ENCODE measurements at regions of chr17 and their contacts with region 1.

Region 1: GRCh38 chr17:17752089-17752820 is 71.0 kb downstream of the RAI1 start:
- DNase-seq: peak; percentile 97
- H3K4me3 Mint-ChIP-seq: peak overlapping the region; percentile 92
- H3K27ac Mint-ChIP-seq: peak overlapping the region; percentile 98
- H3K4me1 Mint-ChIP-seq: peaks cover 71% of the 10 kb centered on the region
- H3K27me3 Mint-ChIP-seq: no peaks in the 10 kb centered on the region

Region 2: GRCh38 chr17:17280613-17281549 is 471.4 kb before region 1 on chr17 and contains the start of gene COPS3:
- CTCF ChIA-PET with region 1: no interaction called
- intact Hi-C with region 1: loop called (anchors 2 kb)
- DNase-seq: peak; percentile 99
- H3K4me3 Mint-ChIP-seq: peak within 1 kb of the TSS; percentile 94
- H3K27ac Mint-ChIP-seq: peak within 1 kb of the TSS; percentile 88
- H3K4me1 Mint-ChIP-seq: peaks cover 39% of the 10 kb centered on the region
- H3K27me3 Mint-ChIP-seq: no peaks in the 10 kb centered on the region
- total RNA-seq, gene COPS3: 103 to 104 TPM

Region 3: DNA sequence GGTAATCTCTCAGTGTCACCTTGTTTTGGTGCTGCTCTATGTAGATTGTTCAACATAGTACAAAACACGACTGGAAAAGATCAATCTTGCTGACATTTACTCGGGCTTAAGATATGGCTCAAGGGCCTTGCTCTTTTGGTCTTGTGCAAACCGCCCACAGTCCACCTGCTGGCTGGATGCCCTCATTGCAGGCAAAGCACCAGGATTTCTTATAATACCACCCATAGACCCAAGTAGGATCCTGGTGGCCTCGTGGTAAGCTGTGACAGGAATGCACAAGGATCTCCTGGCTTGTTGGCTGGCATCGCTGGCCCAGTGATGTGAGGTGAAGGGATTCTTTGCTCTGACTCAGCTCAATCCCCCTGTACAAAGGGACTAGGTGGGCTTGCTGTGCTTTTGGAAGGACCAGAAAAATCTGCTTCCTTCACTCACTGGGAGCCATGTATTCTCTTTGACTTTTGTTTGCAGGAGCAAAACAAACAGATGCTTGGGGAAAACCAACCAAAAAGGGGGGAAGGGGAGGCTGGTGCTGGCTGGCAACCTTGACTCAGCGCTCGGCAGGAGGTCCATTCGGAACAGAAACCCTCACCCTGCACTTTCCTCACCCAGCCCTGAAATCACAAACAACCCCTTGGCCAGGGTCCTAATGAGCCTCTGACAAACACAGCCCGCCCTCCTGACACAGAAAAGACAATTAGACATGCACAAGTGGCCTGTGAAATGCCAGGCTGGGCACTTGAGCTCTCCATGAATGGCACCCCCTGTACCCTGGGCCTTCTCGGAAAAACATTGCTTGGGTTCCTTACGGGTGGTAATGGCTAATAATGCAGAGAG is 312.0 kb before region 1 on chr17:
- CTCF ChIA-PET with region 1: no interaction called
- intact Hi-C with region 1: no loop called
- DNase-seq: peak; percentile 85
- H3K4me3 Mint-ChIP-seq: no peak overlapping the region
- H3K27ac Mint-ChIP-seq: no peak overlapping the region
- H3K4me1 Mint-ChIP-seq: peaks cover 4% of the 10 kb centered on the region
- H3K27me3 Mint-ChIP-seq: no peaks in the 10 kb centered on the region

Region 4: DNA sequence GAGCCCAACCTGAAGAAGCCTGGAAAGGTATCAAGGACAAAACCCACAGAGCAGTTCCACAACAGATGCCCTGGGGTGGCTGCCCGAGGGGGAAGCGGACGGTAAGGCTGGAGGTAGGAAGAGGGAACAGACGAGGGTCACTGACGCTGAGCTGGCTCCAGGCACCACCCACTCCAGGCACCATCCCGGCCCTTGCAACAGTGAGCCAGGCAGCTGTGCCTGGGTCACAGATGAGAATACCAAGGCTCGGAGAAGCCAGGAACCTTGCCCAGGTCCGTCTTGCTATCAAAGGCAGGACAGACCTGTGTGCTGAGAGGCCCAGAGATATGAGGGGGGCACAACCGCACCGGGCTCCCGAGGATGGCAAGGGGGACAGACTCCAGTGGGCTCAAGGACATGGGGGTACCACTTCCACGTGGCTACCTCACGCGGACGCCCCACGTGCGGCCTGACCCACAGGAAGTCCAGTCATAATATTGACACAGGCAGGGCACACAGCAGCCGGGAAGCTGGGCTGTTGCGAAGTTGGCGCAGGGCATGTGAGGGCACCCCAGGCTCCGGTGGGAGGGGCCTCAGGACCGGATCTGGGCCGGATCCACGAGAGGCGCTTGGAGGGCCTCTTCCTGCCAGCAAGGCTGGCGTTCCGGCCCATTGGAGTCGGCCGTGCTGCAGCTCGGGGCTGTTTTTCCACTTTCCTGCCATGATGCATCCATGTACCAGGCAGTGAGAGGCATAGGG is 190.7 kb before region 1 on chr17:
- CTCF ChIA-PET with region 1: no interaction called
- intact Hi-C with region 1: no loop called
- DNase-seq: no peak
- H3K4me3 Mint-ChIP-seq: no peak overlapping the region
- H3K27ac Mint-ChIP-seq: no peak overlapping the region
- H3K4me1 Mint-ChIP-seq: no peaks in the 10 kb centered on the region
- H3K27me3 Mint-ChIP-seq: no peaks in the 10 kb centered on the region

Region 5: DNA sequence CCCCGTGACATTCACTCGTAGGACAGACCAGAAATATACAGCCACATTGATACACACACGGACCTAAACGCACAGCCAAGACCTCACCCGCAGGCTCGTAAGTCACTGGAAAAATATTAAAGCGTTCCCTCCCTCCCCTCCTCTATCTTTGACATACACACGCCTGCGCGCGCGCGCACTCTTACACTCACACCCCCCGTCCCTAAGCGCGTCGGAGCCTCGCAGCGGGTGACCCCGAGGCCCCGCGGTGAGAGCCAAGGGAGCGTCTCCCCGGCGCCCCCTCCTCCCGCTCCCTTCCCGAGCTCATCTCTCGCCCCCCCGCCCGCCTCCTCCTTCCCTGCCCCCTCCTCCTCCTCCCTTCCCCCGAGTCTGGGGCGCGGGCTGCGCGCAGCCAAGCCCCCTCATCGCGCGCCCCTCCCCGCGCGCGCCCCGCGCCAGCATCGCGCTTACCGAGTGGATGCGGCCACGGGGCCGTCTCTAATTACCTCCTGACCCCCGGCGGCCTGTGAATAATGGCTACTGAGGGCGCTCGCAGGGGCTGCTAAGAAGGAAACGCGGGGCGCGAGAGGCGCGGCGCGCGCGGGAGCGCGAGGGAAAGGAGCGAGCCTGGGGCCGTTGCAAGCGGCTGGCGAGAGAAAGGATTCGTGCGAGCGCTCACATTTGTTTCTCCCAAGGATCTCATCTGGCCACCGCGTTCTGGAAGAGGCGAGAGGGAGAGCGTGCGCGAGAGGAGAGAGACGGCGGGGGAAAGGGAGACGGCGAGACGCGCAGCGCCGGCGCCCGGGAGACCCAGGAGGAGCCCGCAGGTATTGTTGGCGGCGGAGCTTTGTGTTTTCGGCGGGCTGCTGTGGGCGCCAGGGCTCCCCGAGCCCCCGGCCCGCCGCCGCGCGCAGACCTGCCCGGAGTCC is 28.6 kb before region 1 on chr17:
- CTCF ChIA-PET with region 1: no interaction called
- intact Hi-C with region 1: loop called (anchors 2 kb)
- DNase-seq: peak; percentile 22
- H3K4me3 Mint-ChIP-seq: peak overlapping the region; percentile 80
- H3K27ac Mint-ChIP-seq: no peak overlapping the region
- H3K4me1 Mint-ChIP-seq: peaks cover 37% of the 10 kb centered on the region
- H3K27me3 Mint-ChIP-seq: peaks cover 24% of the 10 kb centered on the region

Region 6: DNA sequence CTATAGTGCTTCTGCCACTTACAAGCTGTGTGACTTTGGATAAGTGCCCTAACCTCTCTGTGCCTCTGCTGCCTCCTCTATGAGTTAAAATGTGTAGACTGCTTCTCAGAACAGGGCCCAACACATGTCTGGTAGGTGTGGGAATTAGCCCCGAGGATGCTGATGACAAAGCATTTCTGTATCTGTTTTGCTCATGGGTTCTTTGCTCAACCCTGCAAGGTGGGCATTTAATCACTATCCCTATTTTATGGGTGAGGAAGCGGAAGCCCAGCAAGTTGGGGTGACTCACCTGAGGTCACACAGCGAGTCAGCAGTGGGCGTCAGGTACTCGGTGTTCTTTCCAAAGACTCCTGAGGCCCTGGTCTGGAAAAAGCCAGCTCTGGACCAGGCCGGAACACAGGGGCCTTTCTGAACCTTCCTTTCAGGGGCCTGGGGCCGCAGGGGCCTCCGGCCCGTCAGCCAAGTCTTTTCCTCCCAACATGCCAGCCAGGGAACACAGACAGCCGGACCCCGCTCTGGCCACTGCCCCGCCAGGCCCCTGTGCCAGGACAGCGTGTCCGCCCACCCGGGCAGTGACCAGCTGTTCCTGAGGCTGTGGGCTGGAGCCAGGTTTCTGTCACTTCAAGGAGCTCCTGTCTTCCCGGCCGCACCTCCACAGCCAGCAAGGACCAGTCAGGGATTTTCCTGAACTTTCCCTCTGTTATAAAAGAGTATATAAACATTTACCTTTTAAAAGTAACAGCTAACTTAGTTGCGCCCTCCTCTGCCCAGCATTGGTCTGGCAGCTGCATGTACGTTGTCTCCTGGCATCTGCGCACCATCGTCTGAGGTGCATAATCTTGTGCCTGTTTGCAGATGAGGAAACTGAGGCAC is 22.0 kb after region 1 on chr17:
- CTCF ChIA-PET with region 1: no interaction called
- intact Hi-C with region 1: no loop called
- DNase-seq: peak; percentile 38
- H3K4me3 Mint-ChIP-seq: no peak overlapping the region
- H3K27ac Mint-ChIP-seq: no peak overlapping the region
- H3K4me1 Mint-ChIP-seq: peaks cover 10% of the 10 kb centered on the region
- H3K27me3 Mint-ChIP-seq: no peaks in the 10 kb centered on the region

Region 7: GRCh38 chr17:17792551-17793377 is 40.5 kb after region 1 on chr17:
- CTCF ChIA-PET with region 1: no interaction called
- intact Hi-C with region 1: loop called (anchors 2 kb)
- DNase-seq: peak; percentile 82
- H3K4me3 Mint-ChIP-seq: no peak overlapping the region
- H3K27ac Mint-ChIP-seq: peak overlapping the region; percentile 37
- H3K4me1 Mint-ChIP-seq: peaks cover 20% of the 10 kb centered on the region
- H3K27me3 Mint-ChIP-seq: no peaks in the 10 kb centered on the region

Region 8: GRCh38 chr17:17836250-17836817 is 84.1 kb after region 1 on chr17:
- CTCF ChIA-PET with region 1: no interaction called
- intact Hi-C with region 1: loop called (anchors 1 kb)
- DNase-seq: peak; percentile 99
- H3K4me3 Mint-ChIP-seq: peak overlapping the region; percentile 91
- H3K27ac Mint-ChIP-seq: peak overlapping the region; percentile 98
- H3K4me1 Mint-ChIP-seq: peaks cover 72% of the 10 kb centered on the region
- H3K27me3 Mint-ChIP-seq: no peaks in the 10 kb centered on the region

Region 9: GRCh38 chr17:17972126-17972951 is 220.1 kb after region 1 on chr17 and contains the starts of genes DRC3 and TOM1L2:
- CTCF ChIA-PET with region 1: no interaction called
- intact Hi-C with region 1: loop called (anchors 1 kb)
- DNase-seq: peak; percentile 100
- H3K4me3 Mint-ChIP-seq: peak within 1 kb of the TSS; percentile 90
- H3K27ac Mint-ChIP-seq: peak within 1 kb of the TSS; percentile 75
- H3K4me1 Mint-ChIP-seq: peaks cover 35% of the 10 kb centered on the region
- H3K27me3 Mint-ChIP-seq: no peaks in the 10 kb centered on the region
- total RNA-seq, gene DRC3: 0.40 to 0.64 TPM
- total RNA-seq, gene TOM1L2: 9.8 to 9.9 TPM

Measured in activated naive CD4-positive, alpha-beta T cell treated with anti-CD3 and anti-CD28 coated beads for 36 hours (primary cell).